Activated CD8-positive, alpha-beta memory T cell treated with anti-CD3 and anti-CD28 coated beads, Interleukin-2, amount 10 ng/mL, durations not matched to agents 7 days and 5 days (primary cell): ENCODE measurements at regions of chr1 and their contacts with region 1.

Region 1: DNA sequence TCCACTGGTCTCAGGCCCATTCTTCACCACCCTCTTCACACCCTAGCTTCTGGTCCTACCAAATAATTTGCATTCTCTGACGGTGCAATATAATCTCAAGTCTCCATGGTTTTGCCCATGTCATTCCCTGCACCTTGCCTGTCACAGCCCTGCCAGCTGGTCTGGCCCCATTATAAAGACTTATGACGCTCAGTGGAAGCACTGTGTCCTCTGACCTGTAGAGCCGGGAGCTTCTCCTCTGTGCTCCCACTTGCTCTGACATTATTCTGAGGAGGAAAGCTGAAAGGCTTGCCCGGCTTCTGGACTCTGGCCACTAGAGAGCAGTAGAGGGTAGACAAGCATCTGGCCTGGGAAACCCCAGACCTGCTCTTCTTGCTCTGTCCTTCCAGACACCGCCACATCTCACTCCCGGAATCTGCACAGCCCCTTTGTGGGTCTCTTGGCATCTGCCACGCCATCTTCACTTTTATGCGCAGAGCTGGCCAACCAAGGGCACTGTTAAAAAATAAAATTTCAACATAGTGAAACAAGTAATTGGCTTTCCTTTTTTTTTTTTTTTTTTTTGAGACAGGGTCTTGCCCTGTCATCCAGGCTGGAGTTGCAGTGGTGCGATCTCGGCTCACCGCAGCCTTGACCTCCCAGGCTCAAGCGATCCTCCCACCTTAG is 44.4 kb downstream of the NENF start:
- DNase-seq: peak; percentile 86
- ATAC-seq: peak; percentile 93
- H3K4me3 Mint-ChIP-seq: no peak overlapping the region
- H3K27ac Mint-ChIP-seq: no peak overlapping the region
- H3K4me1 Mint-ChIP-seq: peaks cover 25% of the 10 kb centered on the region
- H3K27me3 Mint-ChIP-seq: peaks cover 20% of the 10 kb centered on the region

Region 2: GRCh38 chr1:212608209-212608955 is 131.2 kb after region 1 on chr1 and contains the start of gene ATF3:
- CTCF ChIA-PET with region 1: interaction called, 17 read pairs
- DNase-seq: peak; percentile 98
- ATAC-seq: peak; percentile 78
- H3K4me3 Mint-ChIP-seq: peak within 1 kb of the TSS; percentile 90
- H3K27ac Mint-ChIP-seq: peak within 1 kb of the TSS; percentile 96
- H3K4me1 Mint-ChIP-seq: peaks cover 50% of the 10 kb centered on the region
- H3K27me3 Mint-ChIP-seq: peaks cover 37% of the 10 kb centered on the region
- total RNA-seq, gene ATF3: 21.3 to 36.5 TPM

Region 3: GRCh38 chr1:212630158-212630900 is 153.2 kb after region 1 on chr1:
- CTCF ChIA-PET with region 1: interaction called, 16 read pairs
- DNase-seq: peak; percentile 71
- ATAC-seq: peak; percentile 91
- H3K4me3 Mint-ChIP-seq: no peak overlapping the region
- H3K27ac Mint-ChIP-seq: no peak overlapping the region
- H3K4me1 Mint-ChIP-seq: peaks cover 9% of the 10 kb centered on the region
- H3K27me3 Mint-ChIP-seq: peaks cover 6% of the 10 kb centered on the region

Region 4: DNA sequence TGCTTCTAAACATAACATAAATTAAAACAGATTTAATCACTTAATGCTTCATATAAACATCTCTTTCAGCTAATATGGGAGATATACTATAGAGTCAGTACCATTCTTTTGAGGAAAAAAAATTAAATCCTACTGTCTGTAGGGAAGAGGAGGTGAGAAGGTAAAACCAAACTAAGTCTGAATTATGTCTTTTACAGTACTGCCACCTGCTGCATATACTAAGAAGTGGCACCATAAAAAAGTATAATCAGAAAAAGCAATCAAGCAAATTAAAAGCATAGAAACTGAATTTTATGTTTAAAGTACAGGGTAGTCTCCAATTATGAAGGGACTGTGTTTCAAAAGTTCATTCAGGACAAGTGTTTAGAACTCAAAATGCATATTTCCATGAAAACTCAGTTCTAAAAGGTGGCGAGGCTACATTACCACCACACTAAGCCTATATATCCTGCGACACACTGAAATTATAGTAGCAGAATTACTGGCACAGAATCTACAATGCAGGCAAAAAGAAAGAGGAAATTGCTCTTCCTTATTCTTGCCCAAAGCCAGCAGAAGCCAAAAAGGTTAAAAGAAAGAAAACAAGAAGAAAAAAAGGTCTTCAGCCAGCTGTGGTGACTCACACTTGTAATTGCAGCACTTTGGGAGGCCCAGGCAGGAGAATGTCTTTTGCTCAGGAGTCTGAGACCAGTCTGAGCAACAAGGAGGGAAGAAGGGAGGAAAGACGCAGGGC is 305.4 kb after region 1 on chr1:
- CTCF ChIA-PET with region 1: interaction called, 16 read pairs
- DNase-seq: no peak
- ATAC-seq: peak; percentile 60
- H3K4me3 Mint-ChIP-seq: no peak overlapping the region
- H3K27ac Mint-ChIP-seq: no peak overlapping the region
- H3K4me1 Mint-ChIP-seq: peaks cover 36% of the 10 kb centered on the region
- H3K27me3 Mint-ChIP-seq: no peaks in the 10 kb centered on the region

Region 5: GRCh38 chr1:212819726-212820125 is 342.6 kb after region 1 on chr1:
- CTCF ChIA-PET with region 1: no interaction called
- DNase-seq: no peak
- ATAC-seq: no peak
- H3K4me3 Mint-ChIP-seq: no peak overlapping the region
- H3K27ac Mint-ChIP-seq: no peak overlapping the region
- H3K4me1 Mint-ChIP-seq: peaks cover 4% of the 10 kb centered on the region
- H3K27me3 Mint-ChIP-seq: no peaks in the 10 kb centered on the region